ENCODE measurements at regions of chr7 and their contacts with region 1.

Region 1: GRCh38 chr7:19747740-19748339 is 25.6 kb downstream of the TMEM196 start:
- DNase-seq: no peak
- ATAC-seq: no peak
- H3K4me3 ChIP-seq: no peak overlapping the region
- H3K27ac ChIP-seq: no peak overlapping the region
- H3K4me1 ChIP-seq: no peaks in the 10 kb centered on the region
- H3K27me3 ChIP-seq: no peaks in the 10 kb centered on the region
- CTCF ChIP-seq: peak; percentile 55

Region 2: DNA sequence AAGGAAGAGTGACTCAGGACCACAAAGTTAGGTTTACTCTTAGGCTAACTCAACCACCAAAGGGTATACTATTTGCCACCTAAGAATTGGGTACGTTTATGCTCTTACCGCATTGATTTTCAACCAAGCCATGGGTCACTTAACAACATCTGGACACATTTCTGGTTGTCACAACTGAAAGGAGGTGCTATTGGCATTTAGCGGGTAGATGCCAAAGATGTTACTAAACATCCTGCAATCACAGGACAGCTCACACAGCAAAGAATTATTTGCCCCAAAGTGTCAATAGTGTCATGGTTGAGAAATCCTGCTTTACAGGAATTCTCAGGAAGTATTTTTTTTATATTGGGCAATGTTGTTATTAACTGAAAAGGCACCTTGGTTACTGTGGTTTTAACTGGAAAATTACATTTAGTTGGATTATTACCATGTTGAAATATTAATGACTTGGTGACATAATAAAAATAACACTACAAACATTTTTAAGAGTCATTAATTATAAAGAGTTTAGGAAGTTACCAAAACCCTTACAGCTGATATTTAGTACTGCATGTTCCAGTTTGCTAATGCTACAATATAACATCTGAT is 210.6 kb after region 1 on chr7:
- intact Hi-C with region 1: no loop called
- DNase-seq: no peak
- ATAC-seq: peak; percentile 79 to 80
- H3K4me3 ChIP-seq: no peak overlapping the region
- H3K27ac ChIP-seq: no peak overlapping the region
- H3K4me1 ChIP-seq: no peaks in the 10 kb centered on the region
- H3K27me3 ChIP-seq: no peaks in the 10 kb centered on the region
- CTCF ChIP-seq: no peak

Region 3: GRCh38 chr7:20598459-20599309 is 850.8 kb after region 1 on chr7:
- intact Hi-C with region 1: loop called (anchors 10 kb)
- DNase-seq: no peak
- ATAC-seq: peak; percentile 79 to 82
- H3K4me3 ChIP-seq: no peak overlapping the region
- H3K27ac ChIP-seq: no peak overlapping the region
- H3K4me1 ChIP-seq: no peaks in the 10 kb centered on the region
- H3K27me3 ChIP-seq: no peaks in the 10 kb centered on the region
- CTCF ChIP-seq: peak; percentile 81